Activated T-helper 1 cell treated with anti-CD3 and anti-CD28 coated beads, Interleukin-12 subunit alpha, Interleukin-12 subunit beta, Interleukin-2, Interleukin-4 antibody, amounts not matched to agents 30 ng/mL and 10 ng/mL and 1 ng/mL, durations not matched to agents 14 hours and 24 hours and 36 hours (primary cell): ENCODE measurements at regions of chr1 and their contacts with region 1.

Region 1: GRCh38 chr1:62841587-62842169 is 57.7 kb downstream of the ATG4C start:
- DNase-seq: no peak
- H3K4me3 Mint-ChIP-seq: no peak overlapping the region
- H3K27ac Mint-ChIP-seq: no peak overlapping the region
- H3K4me1 Mint-ChIP-seq: no peaks in the 10 kb centered on the region
- H3K27me3 Mint-ChIP-seq: no peaks in the 10 kb centered on the region

Region 2: GRCh38 chr1:62765981-62766380 is 75.7 kb before region 1 on chr1:
- intact Hi-C with region 1: no loop called
- DNase-seq: no peak
- H3K4me3 Mint-ChIP-seq: no peak overlapping the region
- H3K27ac Mint-ChIP-seq: no peak overlapping the region
- H3K4me1 Mint-ChIP-seq: no peaks in the 10 kb centered on the region
- H3K27me3 Mint-ChIP-seq: peaks cover 19% of the 10 kb centered on the region

Region 3: DNA sequence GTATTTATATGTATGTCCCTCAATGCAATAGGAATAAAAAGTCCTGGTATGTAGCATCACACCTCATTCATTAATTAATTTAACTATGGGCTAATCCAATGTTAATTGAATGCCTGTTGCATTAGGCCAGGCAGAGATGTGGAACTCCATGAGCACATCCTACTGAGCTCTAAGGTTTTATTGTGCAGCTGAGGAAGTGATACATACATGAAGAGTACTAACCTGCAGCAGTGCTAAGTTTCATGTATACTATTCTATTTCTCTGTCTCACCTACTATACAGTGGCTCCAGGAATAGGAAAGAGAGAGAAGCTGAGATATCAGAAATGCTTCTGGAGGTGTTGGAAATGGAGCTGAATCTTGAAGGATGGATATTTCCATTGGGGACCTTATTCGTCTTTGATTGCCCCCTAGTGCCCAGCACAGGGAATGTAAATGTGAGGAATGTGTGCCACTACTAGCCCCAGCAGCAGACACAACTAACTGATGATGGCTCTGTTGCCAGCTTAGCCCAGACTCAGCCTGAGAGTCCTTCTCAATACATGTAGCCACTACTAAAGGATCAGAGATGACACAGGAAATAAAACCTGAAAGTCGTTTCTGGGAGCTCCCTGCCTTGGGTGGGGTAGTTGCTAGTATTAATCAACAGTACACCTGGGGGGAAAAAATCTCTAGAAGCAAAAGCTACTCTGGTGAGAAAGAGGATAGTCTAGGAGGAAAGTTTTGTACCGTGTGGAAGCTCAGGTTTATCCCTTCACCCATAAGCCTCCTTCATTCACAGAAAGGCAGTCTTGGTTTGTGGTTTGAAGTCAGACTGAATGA is 307.4 kb after region 1 on chr1:
- intact Hi-C with region 1: loop called (anchors 2 kb)
- DNase-seq: no peak
- H3K4me3 Mint-ChIP-seq: no peak overlapping the region
- H3K27ac Mint-ChIP-seq: no peak overlapping the region
- H3K4me1 Mint-ChIP-seq: no peaks in the 10 kb centered on the region
- H3K27me3 Mint-ChIP-seq: no peaks in the 10 kb centered on the region

Region 4: GRCh38 chr1:63537940-63538339 is 696.3 kb after region 1 on chr1:
- intact Hi-C with region 1: loop called (anchors 5 kb)
- DNase-seq: no peak
- H3K4me3 Mint-ChIP-seq: no peak overlapping the region
- H3K27ac Mint-ChIP-seq: no peak overlapping the region
- H3K4me1 Mint-ChIP-seq: no peaks in the 10 kb centered on the region
- H3K27me3 Mint-ChIP-seq: no peaks in the 10 kb centered on the region